GM12878 (cell line): ENCODE measurements at regions of chr3 and their contacts with region 1.

Region 1: DNA sequence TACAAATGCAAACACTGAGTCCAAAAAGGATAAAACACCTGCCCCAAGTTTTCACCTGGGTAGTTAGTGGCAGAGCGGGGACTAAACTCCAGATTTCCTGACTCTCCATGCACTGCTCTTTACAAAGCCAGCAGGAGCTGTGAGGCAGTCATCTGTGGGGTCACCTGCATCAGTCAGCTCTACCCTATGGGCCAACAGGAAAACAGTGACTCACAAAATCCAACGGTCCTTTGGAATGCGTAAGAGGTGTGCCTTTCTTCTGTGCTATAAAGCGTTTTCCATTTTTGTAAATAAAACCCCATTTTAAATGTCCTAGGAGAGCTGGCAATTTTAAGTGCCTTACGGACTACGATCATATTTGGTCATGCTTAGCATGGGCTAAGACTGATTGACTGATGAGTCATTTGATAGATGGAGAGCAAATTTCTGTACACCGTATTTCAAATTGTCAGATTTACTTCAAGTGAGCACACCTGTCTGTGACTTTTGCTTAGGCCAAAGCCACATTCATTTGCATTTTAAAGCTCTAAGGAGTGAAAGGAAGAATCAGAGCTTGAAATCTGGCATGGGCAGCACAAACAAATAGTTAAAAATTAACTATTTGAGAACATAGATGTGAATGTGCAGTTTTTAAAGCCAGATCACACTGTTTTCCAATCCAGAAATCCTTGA is 4.4 kb upstream of the COL8A1 start:
- DNase-seq: no peak
- ATAC-seq: no peak; the same call in 1 of the 3 replicates
- H3K4me3 ChIP-seq: no peak overlapping the region
- H3K27ac ChIP-seq: no peak overlapping the region
- H3K4me1 ChIP-seq: no peaks in the 10 kb centered on the region
- H3K27me3 ChIP-seq: peaks cover 4 to 6% of the 10 kb centered on the region in 2 experiments; a peak in 3 of 4 replicates
- CTCF ChIP-seq: no peak
- EP300 ChIP-seq: no peak
- POLR2A ChIP-seq: no peak
- RAD21 ChIP-seq: no peak

Region 2: GRCh38 chr3:99645277-99646106 is 11.5 kb after region 1 on chr3:
- CTCF ChIA-PET with region 1: interaction called, 12 read pairs
- POLR2A ChIA-PET with region 1: no interaction called
- RAD21 ChIA-PET with region 1: no interaction called
- SMC1A ChIA-PET with region 1: interaction called, 4 read pairs
- in situ Hi-C with region 1: no loop called
- intact Hi-C with region 1: no loop called
- DNase-seq: no peak
- ATAC-seq: peak; percentile 70
- H3K4me3 ChIP-seq: no peak overlapping the region
- H3K27ac ChIP-seq: no peak overlapping the region
- H3K4me1 ChIP-seq: no peaks in the 10 kb centered on the region
- H3K27me3 ChIP-seq: peaks cover 0 to 2% of the 10 kb centered on the region in 2 experiments; a peak in 1 of 4 replicates
- CTCF ChIP-seq: peak; percentile 28 to 69 (median 68)
- EP300 ChIP-seq: no peak
- POLR2A ChIP-seq: no peak
- RAD21 ChIP-seq: peak; percentile 45

Region 3: GRCh38 chr3:99693636-99694035 is 59.6 kb after region 1 on chr3:
- CTCF ChIA-PET with region 1: no interaction called
- POLR2A ChIA-PET with region 1: no interaction called
- RAD21 ChIA-PET with region 1: no interaction called
- SMC1A ChIA-PET with region 1: no interaction called
- in situ Hi-C with region 1: no loop called
- intact Hi-C with region 1: no loop called
- DNase-seq: no peak
- ATAC-seq: no peak
- H3K4me3 ChIP-seq: no peak overlapping the region
- H3K27ac ChIP-seq: no peak overlapping the region
- H3K4me1 ChIP-seq: no peaks in the 10 kb centered on the region
- H3K27me3 ChIP-seq: no peaks in the 10 kb centered on the region; a peak in 2 of 4 replicates
- CTCF ChIP-seq: no peak
- EP300 ChIP-seq: no peak
- POLR2A ChIP-seq: no peak
- RAD21 ChIP-seq: no peak